Mammary epithelial cell (primary cell): ENCODE measurements at regions of chr7 and their contacts with region 1.

Region 1: DNA sequence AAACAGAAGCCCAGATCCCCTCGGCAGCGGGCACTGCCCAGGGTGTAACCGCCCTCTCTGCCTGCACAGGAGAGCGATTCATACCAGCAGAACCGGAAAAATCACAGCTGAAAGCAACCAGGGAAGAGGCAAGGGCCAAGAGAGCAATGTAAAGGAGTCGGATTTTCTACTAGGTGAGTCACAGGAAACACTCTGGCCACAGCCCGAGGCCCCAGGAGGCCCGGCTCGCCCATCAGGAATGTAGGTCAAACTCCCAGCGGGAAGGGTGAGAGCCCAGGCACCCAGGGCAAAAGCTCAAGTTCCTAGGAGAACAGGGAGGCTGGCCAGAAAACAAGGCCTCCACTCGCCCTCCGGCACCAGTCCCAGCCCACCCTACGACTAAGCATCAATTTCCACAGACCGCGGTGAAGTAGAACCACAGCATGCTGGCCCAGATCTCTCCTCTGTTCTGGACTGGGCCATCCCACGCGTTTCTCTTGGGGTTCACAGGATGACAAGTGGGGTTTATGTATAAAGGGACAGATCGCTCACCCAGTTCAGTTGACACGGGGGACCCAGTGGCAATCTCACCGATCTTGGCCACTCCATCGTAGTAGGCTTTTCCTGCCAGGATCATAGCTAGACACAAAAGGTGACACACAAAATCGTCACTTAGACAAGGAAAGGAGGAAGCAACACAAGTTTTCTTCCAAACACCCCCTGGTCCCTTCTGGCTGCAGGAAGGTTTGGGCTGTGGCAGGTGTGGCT is 46.2 kb downstream of the BAIAP2L1 start:
- DNase-seq: peak; percentile 93
- H3K4me3 ChIP-seq: peak overlapping the region in 2 of 3 experiments; percentile 4 to 22
- H3K27ac ChIP-seq: peak overlapping the region; percentile 88
- H3K4me1 ChIP-seq: peaks cover 31% of the 10 kb centered on the region
- H3K27me3 ChIP-seq: no peaks in the 10 kb centered on the region
- CTCF ChIP-seq: no peak

Region 2: DNA sequence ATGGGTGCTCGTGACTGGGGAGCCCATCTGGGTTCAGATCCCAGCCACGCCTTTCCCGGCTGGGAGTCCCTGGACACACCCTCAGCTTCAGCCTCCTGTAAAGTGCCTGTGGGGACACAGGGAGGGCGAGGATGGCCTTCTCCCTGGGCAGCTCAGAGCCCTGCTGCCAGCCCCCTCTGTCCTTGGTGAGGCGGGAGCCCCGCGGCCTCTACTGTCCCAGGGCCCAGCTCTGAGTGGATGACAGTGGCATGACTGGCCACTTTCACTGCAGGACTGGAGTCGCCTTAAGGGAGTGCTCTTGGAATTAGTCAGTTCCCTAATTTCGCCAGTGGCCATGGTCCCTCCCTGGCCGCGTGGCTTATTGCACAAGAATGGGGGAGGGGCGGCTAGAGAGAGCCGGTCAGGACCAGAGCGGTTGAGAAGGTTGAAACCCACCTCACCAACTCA is 68.6 kb before region 1 on chr7:
- CTCF ChIA-PET with region 1: no interaction called
- dilution Hi-C with region 1: no loop called
- in situ Hi-C with region 1: no loop called
- intact Hi-C with region 1: loop called (anchors 1 kb)
- DNase-seq: peak; percentile 73
- H3K4me3 ChIP-seq: no peak overlapping the region
- H3K27ac ChIP-seq: peak overlapping the region; percentile 26
- H3K4me1 ChIP-seq: peaks cover 65% of the 10 kb centered on the region
- H3K27me3 ChIP-seq: no peaks in the 10 kb centered on the region
- CTCF ChIP-seq: no peak